ENCODE measurements at regions of chr7 and their contacts with region 1.

Region 1: GRCh38 chr7:5363729-5364128 is 59.9 kb downstream of the TNRC18 start:
- DNase-seq: no peak
- H3K4me3 ChIP-seq: no peak overlapping the region
- H3K4me3 Mint-ChIP-seq: peak overlapping the region in 4 of 8 donors; percentile 16 to 40 (median 30)
- H3K27ac ChIP-seq: no peak overlapping the region
- H3K27ac Mint-ChIP-seq: peak overlapping the region in 5 of 7 donors; percentile 9 to 44 (median 12)
- H3K4me1 ChIP-seq: peaks cover 7% of the 10 kb centered on the region
- H3K4me1 Mint-ChIP-seq: peaks cover 11 to 26% (median 20%) of the 10 kb centered on the region in 4 donors
- H3K27me3 ChIP-seq: no peaks in the 10 kb centered on the region
- H3K27me3 Mint-ChIP-seq: no peaks in the 10 kb centered on the region

Region 2: DNA sequence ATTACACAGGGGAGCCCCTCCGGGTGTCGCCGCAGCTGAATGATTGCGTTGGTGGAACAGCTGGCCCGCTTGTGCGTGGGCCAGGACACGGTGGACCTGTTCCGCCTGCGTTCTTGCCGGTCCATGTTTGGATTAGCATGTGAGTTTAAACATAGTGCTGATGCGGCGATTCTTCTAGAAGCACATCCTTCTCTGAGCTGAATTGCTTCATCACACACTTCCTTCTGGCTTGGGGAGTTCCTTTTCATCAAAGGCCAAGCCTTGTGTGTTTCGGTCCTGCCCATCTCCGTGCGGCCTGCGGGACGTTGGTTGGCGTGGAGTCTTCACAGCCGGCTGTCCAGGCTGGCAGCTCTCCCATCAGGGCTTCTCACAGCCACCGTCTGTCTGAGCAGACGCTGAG is 126.4 kb before region 1 on chr7:
- CTCF ChIA-PET with region 1: interaction called, 13 read pairs
- POLR2A ChIA-PET with region 1: no interaction called
- intact Hi-C with region 1: no loop called
- DNase-seq: no peak
- H3K4me3 ChIP-seq: no peak overlapping the region
- H3K4me3 Mint-ChIP-seq: no peak overlapping the region
- H3K27ac ChIP-seq: no peak overlapping the region
- H3K27ac Mint-ChIP-seq: no peak overlapping the region
- H3K4me1 ChIP-seq: peaks cover 13% of the 10 kb centered on the region
- H3K4me1 Mint-ChIP-seq: peaks cover 4 to 12% (median 6%) of the 10 kb centered on the region in 4 donors
- H3K27me3 ChIP-seq: no peaks in the 10 kb centered on the region
- H3K27me3 Mint-ChIP-seq: peaks cover 9 to 10% of the 10 kb centered on the region in 2 donors

Region 3: GRCh38 chr7:5382281-5382892 is 18.7 kb after region 1 on chr7:
- CTCF ChIA-PET with region 1: interaction called, 12 read pairs
- POLR2A ChIA-PET with region 1: no interaction called
- intact Hi-C with region 1: no loop called
- DNase-seq: peak in 1 of 5 donors; percentile 34
- H3K4me3 ChIP-seq: no peak overlapping the region
- H3K4me3 Mint-ChIP-seq: no peak overlapping the region
- H3K27ac ChIP-seq: no peak overlapping the region
- H3K27ac Mint-ChIP-seq: peak overlapping the region in 1 of 7 donors; percentile 41
- H3K4me1 ChIP-seq: peaks cover 28% of the 10 kb centered on the region
- H3K4me1 Mint-ChIP-seq: peaks cover 18 to 43% (median 27%) of the 10 kb centered on the region in 4 donors
- H3K27me3 ChIP-seq: no peaks in the 10 kb centered on the region
- H3K27me3 Mint-ChIP-seq: no peaks in the 10 kb centered on the region

Region 4: GRCh38 chr7:5450549-5451372 is 87.0 kb after region 1 on chr7:
- CTCF ChIA-PET with region 1: interaction called, 41 read pairs
- POLR2A ChIA-PET with region 1: no interaction called
- intact Hi-C with region 1: loop called (anchors 1 kb)
- DNase-seq: peak in 4 of 5 donors; percentile 16 to 24 (median 23)
- H3K4me3 ChIP-seq: no peak overlapping the region
- H3K4me3 Mint-ChIP-seq: no peak overlapping the region
- H3K27ac ChIP-seq: no peak overlapping the region
- H3K27ac Mint-ChIP-seq: no peak overlapping the region
- H3K4me1 ChIP-seq: no peaks in the 10 kb centered on the region
- H3K4me1 Mint-ChIP-seq: no peaks in the 10 kb centered on the region
- H3K27me3 ChIP-seq: no peaks in the 10 kb centered on the region
- H3K27me3 Mint-ChIP-seq: peaks cover 0 to 2% of the 10 kb centered on the region in 2 donors

Measured in CD4-positive, alpha-beta memory T cell (primary cell).